Kidney (tissue), 22 donors: ENCODE measurements at regions of chr10 and their contacts with region 1.

Region 1: GRCh38 chr10:60820093-60820754 is 41.9 kb downstream of the CDK1 start:
- DNase-seq: peak in 3 of 5 donors; percentile 35 to 88 (median 73)
- H3K4me3 ChIP-seq: no peak overlapping the region
- H3K27ac ChIP-seq: peak overlapping the region in 1 of 2 donors; percentile 2
- H3K4me1 ChIP-seq: peaks cover 2 to 11% (median 5%) of the 10 kb centered on the region in 3 donors
- H3K27me3 ChIP-seq: no peaks in the 10 kb centered on the region
- CTCF ChIP-seq: peak; percentile 26

Region 2: DNA sequence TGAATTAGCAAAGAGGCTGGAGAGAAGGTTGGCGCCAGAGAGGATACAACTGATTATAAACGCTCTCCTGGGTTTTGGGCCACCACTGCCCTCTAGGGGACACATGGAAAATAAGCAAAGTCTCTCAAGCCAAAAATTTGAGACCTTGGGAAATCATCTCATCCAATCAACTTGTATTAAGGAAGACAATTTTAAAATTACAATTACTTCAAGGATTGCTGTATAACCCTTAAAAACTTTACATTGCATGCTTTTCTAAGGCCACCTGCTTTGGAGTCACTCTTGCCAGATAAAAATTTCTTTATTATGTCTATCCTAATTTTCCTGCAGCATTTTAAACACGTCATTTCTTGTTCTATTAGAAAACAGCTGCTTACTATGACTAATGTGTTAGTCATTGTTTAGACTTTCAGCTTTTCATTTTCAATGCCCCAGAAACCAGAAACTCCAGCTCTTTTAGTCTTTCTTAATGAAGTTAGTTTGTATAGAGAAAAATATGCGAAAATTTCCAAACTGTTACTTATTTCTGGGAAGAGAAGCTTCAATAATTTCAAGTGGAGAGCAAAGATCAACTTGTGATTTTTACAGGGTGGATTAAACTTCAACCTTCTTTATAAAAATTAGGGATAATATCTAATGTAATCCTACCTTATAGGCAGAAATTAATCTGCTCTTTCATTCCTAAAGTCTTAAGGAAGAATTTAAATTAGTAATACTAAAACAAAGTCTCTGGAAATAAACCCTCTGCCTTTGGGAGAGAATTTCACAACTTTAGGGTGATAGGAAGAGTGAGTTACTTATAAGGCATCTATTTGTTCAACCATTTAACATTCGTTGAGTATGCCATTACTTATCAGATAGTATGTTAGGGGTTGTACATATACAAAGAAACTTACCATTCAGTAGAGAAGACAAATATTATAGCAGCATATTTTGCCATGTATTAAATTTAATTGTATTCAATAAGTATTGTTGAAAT is 144.3 kb after region 1 on chr10:
- intact Hi-C with region 1: loop called (anchors 10 kb)
- DNase-seq: peak; percentile 44 to 92 (median 71)
- H3K4me3 ChIP-seq: peak overlapping the region in 1 of 3 donors; percentile 16
- H3K27ac ChIP-seq: peak overlapping the region; percentile 28 to 62
- H3K4me1 ChIP-seq: peaks cover 0 to 17% (median 3%) of the 10 kb centered on the region in 3 donors
- H3K27me3 ChIP-seq: no peaks in the 10 kb centered on the region
- CTCF ChIP-seq: peak; percentile 78

Region 3: GRCh38 chr10:61284222-61284890 is 464.1 kb after region 1 on chr10:
- intact Hi-C with region 1: loop called (anchors 10 kb)
- DNase-seq: peak in 2 of 5 donors; percentile 74 to 87
- H3K4me3 ChIP-seq: no peak overlapping the region
- H3K27ac ChIP-seq: no peak overlapping the region
- H3K4me1 ChIP-seq: no peaks in the 10 kb centered on the region
- H3K27me3 ChIP-seq: no peaks in the 10 kb centered on the region
- CTCF ChIP-seq: peak; percentile 69